Activated T-helper 1 cell treated with anti-CD3 and anti-CD28 coated beads, Interleukin-12 subunit alpha, Interleukin-12 subunit beta, Interleukin-2, Interleukin-4 antibody, amounts not matched to agents 30 ng/mL and 10 ng/mL and 1 ng/mL, durations not matched to agents 14 hours and 24 hours and 36 hours (primary cell): ENCODE measurements at regions of chr10 and their contacts with region 1.

Region 1: DNA sequence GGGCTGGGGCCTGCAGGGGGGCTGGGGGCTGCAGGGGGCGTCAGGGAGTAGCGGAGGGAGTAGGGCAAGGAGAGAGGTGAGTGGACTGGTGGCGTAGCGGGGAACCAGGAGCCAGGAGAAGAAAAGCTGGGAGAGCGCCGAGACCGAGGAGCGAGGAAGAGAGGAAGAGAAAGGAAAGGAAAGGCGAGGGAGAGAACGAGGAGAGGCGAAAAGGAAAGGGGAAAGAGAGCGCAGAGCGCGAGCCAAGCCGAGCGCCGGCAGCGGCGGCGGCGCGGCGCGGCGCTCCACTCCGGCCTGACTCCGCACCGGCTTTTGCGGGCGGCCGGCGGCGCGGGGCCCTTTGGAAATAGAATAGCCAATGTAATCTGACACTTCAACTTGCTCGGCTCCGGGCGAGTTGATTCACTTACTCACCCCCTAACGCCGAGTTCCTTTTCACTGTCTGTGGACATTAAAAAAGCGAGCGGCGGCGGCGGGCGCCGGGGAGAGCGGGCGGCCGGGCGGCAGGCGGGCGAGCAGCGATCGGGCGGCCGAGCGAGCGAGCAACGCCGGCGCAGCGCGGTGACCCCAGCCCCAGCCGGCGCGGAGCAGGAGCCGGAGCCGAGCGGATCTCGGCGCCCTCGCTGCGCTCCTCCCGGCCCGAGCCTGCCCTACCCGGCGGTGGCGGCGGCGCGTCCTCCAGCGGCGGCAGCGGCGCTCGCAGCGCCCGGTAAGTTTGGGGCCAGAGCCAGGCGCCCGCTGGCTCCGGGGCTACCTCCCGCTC is at the start of gene ZMIZ1:
- DNase-seq: peak; percentile 77
- H3K4me3 Mint-ChIP-seq: peak within 1 kb of the TSS; percentile 91
- H3K27ac Mint-ChIP-seq: peak within 1 kb of the TSS; percentile 86
- H3K4me1 Mint-ChIP-seq: peaks cover 43% of the 10 kb centered on the region
- H3K27me3 Mint-ChIP-seq: peaks cover 16% of the 10 kb centered on the region
- total RNA-seq, gene ZMIZ1: 67.6 and 67.8 TPM in 2 replicates

Region 2: GRCh38 chr10:78302989-78303854 is 765.5 kb before region 1 on chr10:
- intact Hi-C with region 1: loop called (anchors 2 kb)
- DNase-seq: peak; percentile 91
- H3K4me3 Mint-ChIP-seq: peak overlapping the region; percentile 87
- H3K27ac Mint-ChIP-seq: peak overlapping the region; percentile 91
- H3K4me1 Mint-ChIP-seq: peaks cover 15% of the 10 kb centered on the region
- H3K27me3 Mint-ChIP-seq: peaks cover 16% of the 10 kb centered on the region

Region 3: GRCh38 chr10:78972947-78973900 is 95.5 kb before region 1 on chr10:
- intact Hi-C with region 1: loop called (anchors 1 kb)
- DNase-seq: peak; percentile 73
- H3K4me3 Mint-ChIP-seq: peak overlapping the region; percentile 70
- H3K27ac Mint-ChIP-seq: peak overlapping the region; percentile 81
- H3K4me1 Mint-ChIP-seq: peaks cover 42% of the 10 kb centered on the region
- H3K27me3 Mint-ChIP-seq: peaks cover 19% of the 10 kb centered on the region

Region 4: DNA sequence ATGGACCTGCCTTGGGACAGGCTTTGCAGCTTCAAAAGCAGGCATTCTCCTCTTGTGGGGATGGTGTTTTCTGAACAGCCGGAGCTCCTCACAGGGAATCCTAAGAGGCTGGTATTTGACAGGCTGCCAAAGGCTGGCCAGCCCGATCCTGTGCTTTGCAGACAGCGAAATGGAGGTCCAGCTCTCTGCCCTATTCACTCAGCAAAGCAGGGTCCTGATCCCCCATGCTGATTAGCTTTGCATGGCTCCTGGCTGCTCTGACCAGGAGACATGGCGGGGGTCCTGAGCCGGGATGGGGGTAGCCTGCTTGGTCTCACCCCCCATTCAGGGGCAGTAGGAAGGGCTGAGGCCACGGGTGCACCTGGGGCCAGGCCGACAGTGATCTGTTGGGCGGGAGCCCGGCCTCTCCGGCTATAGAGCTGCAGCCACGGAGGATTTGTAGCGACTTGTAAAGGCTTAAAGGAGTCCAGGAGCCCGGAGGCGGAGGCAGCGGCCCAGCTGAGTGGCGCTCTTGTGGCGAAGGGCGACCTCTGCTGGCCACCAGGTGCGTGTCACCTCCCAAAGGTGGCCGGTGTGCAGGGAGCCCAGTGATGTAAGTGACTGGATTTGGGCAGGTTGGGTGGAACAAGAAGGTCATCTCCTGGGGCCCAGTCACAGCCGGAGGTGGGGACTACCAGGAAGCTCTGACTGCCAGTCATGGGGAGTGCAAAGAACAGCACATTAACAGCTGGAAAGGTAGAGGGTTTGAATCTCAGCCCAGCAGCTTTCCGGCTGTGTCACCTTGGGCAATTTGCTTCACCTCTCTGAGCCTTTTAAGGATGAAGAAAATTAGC is 126.6 kb after region 1 on chr10:
- intact Hi-C with region 1: loop called (anchors 1 kb)
- DNase-seq: peak; percentile 67
- H3K4me3 Mint-ChIP-seq: no peak overlapping the region
- H3K27ac Mint-ChIP-seq: no peak overlapping the region
- H3K4me1 Mint-ChIP-seq: peaks cover 6% of the 10 kb centered on the region
- H3K27me3 Mint-ChIP-seq: peaks cover 3% of the 10 kb centered on the region

Region 5: GRCh38 chr10:79347226-79347893 is 278.6 kb after region 1 on chr10 and contains the start of gene PPIF:
- intact Hi-C with region 1: loop called (anchors 5 kb)
- DNase-seq: peak; percentile 95
- H3K4me3 Mint-ChIP-seq: peak within 1 kb of the TSS; percentile 95
- H3K27ac Mint-ChIP-seq: peak within 1 kb of the TSS; percentile 93
- H3K4me1 Mint-ChIP-seq: peaks cover 69% of the 10 kb centered on the region
- H3K27me3 Mint-ChIP-seq: no peaks in the 10 kb centered on the region
- total RNA-seq, gene PPIF: 155 and 157 TPM in 2 replicates